Activated B cell treated with CpG ODN at 0.5 μM for 24 hours (primary cell): ENCODE measurements at regions of chr19 and their contacts with region 1.

Region 1: GRCh38 chr19:39546599-39546998 is 6.6 kb upstream of the EID2 start:
- DNase-seq: no peak
- ATAC-seq: no peak
- H3K4me3 Mint-ChIP-seq: no peak overlapping the region
- H3K27ac Mint-ChIP-seq: no peak overlapping the region
- H3K4me1 Mint-ChIP-seq: peaks cover 10% of the 10 kb centered on the region
- H3K27me3 Mint-ChIP-seq: peaks cover 5% of the 10 kb centered on the region
- CTCF ChIP-seq: no peak

Region 2: DNA sequence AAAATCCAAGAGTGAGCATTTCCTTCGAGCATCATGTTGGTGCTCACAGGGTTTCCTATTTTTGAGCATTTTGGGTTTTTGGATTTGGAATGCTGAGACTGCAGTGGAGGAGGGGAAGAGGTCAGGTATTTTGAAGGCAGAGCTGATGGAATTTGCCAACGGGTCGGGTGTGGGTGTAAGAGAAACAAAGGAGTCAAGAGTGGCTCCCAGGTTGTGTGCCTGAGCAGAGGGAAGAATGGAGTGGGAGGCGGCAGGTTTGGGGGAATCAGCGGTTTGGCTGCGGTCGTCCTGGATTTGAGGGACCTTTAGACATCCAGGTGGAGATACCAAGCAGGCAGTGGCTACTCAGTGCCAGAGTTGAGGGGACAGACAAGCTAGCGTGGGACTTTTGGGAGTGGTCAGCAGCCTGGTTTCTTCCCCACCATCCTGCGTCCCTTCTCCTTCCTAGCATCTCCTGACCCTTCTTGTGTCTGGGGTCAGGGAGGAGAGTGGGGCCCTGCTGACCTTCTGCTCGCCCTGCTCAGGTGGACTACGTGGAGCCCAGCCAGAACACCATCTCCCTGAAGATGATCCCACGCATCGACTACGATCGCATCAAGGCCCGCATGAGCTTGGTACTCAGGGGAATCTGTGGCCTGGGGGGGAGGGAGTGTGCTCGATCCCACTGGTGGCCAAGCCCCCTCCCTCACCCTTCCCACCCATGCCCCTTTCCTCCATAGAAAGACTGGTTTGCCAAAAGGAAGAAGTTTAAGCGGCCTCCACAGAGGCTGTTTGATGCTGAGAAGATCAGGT is 80.4 kb before region 1 on chr19:
- CTCF ChIA-PET with region 1: no interaction called
- POLR2A ChIA-PET with region 1: no interaction called
- intact Hi-C with region 1: no loop called
- DNase-seq: no peak
- ATAC-seq: no peak
- H3K4me3 Mint-ChIP-seq: no peak overlapping the region
- H3K27ac Mint-ChIP-seq: no peak overlapping the region
- H3K4me1 Mint-ChIP-seq: no peaks in the 10 kb centered on the region
- H3K27me3 Mint-ChIP-seq: no peaks in the 10 kb centered on the region
- CTCF ChIP-seq: no peak

Region 3: DNA sequence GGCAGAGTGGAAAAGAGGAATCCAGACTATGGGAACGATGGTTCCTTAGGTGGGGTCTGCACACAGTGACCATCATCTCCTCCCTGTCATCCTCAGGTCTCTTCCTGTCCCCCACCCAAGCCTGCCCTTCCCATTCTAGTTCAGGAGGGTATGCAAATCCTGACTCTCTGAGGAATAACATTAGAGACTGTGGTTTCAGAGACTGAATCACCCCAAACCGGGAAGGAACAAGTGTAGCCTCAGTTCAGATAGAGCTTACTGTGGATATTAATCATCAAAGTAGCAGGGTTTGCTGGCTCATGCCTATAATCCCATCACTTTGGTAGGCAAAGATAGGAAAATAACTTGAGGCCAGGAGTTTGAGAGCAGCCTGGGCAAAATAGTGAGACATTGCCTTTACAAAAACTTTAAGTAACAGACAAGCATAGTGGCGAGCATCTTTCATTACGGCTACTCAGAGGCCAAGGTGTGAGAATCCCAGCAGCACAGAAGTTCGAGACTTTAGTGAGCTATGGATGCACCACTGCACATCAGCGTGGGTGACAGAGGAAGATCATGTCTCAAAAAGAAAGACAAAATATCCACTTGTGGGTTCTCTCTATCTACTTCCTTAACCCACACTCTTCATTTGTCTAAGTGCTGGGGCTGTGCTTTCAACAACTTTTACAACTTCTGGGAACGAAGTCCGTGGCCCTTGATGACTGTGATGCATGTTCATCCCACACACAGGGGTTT is 36.5 kb after region 1 on chr19:
- CTCF ChIA-PET with region 1: no interaction called
- POLR2A ChIA-PET with region 1: no interaction called
- intact Hi-C with region 1: no loop called
- DNase-seq: no peak
- ATAC-seq: no peak
- H3K4me3 Mint-ChIP-seq: no peak overlapping the region
- H3K27ac Mint-ChIP-seq: no peak overlapping the region
- H3K4me1 Mint-ChIP-seq: no peaks in the 10 kb centered on the region
- H3K27me3 Mint-ChIP-seq: peaks cover 28% of the 10 kb centered on the region
- CTCF ChIP-seq: no peak

Region 4: DNA sequence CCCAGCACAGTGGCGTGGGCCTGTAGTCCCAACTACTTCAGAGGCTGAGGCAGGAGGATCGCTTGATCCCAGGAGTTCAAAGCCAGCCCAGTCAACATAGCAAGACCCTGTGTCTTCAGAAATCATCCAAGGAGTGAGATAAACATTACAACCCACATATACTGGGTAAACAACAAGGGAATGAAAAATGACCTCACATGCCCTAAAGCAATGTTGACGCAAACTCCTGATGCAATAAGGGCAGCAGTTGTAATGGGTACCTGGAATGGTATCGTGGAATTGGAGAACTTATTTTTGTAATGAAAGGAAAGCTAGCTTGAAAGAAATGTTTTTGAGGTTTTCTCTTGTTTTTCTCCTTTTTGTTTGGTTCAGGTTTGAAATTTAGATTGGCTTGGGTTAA is 84.6 kb after region 1 on chr19:
- CTCF ChIA-PET with region 1: no interaction called
- POLR2A ChIA-PET with region 1: no interaction called
- intact Hi-C with region 1: loop called (anchors 2 kb)
- DNase-seq: no peak
- ATAC-seq: no peak
- H3K4me3 Mint-ChIP-seq: no peak overlapping the region
- H3K27ac Mint-ChIP-seq: no peak overlapping the region
- H3K4me1 Mint-ChIP-seq: no peaks in the 10 kb centered on the region
- H3K27me3 Mint-ChIP-seq: peaks cover 13% of the 10 kb centered on the region
- CTCF ChIP-seq: no peak

Region 5: GRCh38 chr19:39671738-39672363 is 125.3 kb after region 1 on chr19:
- CTCF ChIA-PET with region 1: interaction called, 35 read pairs
- POLR2A ChIA-PET with region 1: no interaction called
- intact Hi-C with region 1: loop called (anchors 1 kb)
- DNase-seq: no peak
- ATAC-seq: peak; percentile 68
- H3K4me3 Mint-ChIP-seq: no peak overlapping the region
- H3K27ac Mint-ChIP-seq: no peak overlapping the region
- H3K4me1 Mint-ChIP-seq: peaks cover 4% of the 10 kb centered on the region
- H3K27me3 Mint-ChIP-seq: peaks cover 25% of the 10 kb centered on the region
- CTCF ChIP-seq: no peak

Region 6: GRCh38 chr19:39765091-39766076 is 218.8 kb after region 1 on chr19:
- CTCF ChIA-PET with region 1: interaction called, 3 read pairs
- POLR2A ChIA-PET with region 1: no interaction called
- intact Hi-C with region 1: loop called (anchors 2 kb)
- DNase-seq: no peak
- ATAC-seq: no peak
- H3K4me3 Mint-ChIP-seq: no peak overlapping the region
- H3K27ac Mint-ChIP-seq: no peak overlapping the region
- H3K4me1 Mint-ChIP-seq: no peaks in the 10 kb centered on the region
- H3K27me3 Mint-ChIP-seq: peaks cover 10% of the 10 kb centered on the region
- CTCF ChIP-seq: peak; percentile 37